ENCODE measurements at regions of chr10 and their contacts with region 1.

Region 1: DNA sequence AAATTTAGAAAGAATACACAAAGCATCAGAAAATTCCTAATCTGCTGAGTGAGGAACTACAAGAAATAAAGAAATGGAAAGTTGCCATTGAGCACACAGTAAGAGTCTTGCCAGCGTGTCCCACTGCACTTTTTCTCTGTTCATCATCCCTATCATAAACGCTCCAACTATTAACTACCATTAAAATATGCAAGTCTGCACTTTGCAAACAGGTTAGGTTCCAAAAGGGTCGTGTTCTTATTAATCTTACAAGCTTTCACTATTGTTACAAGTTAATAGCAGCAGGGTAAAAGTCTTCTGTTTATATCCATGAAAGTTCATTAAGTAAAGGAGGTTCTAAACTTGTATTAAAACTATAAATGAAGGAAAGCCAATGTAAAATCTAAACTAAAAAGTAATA is 5.2 kb upstream of the JMJD1C start:
- DNase-seq: no peak
- ATAC-seq: no peak
- H3K4me3 ChIP-seq: no peak overlapping the region
- H3K4me3 Mint-ChIP-seq: no peak overlapping the region
- H3K27ac ChIP-seq: no peak overlapping the region
- H3K27ac Mint-ChIP-seq: no peak overlapping the region
- H3K4me1 ChIP-seq: peaks cover 5% of the 10 kb centered on the region
- H3K4me1 Mint-ChIP-seq: peaks cover 8 to 10% of the 10 kb centered on the region in 2 donors
- H3K27me3 ChIP-seq: no peaks in the 10 kb centered on the region
- H3K27me3 Mint-ChIP-seq: peaks cover 0 to 7% of the 10 kb centered on the region in 2 donors
- CTCF ChIP-seq: no peak

Region 2: GRCh38 chr10:63506554-63506953 is 35.6 kb after region 1 on chr10:
- intact Hi-C with region 1: loop called (anchors 5 kb)
- DNase-seq: no peak
- ATAC-seq: no peak
- H3K4me3 ChIP-seq: no peak overlapping the region
- H3K4me3 Mint-ChIP-seq: no peak overlapping the region
- H3K27ac ChIP-seq: no peak overlapping the region
- H3K27ac Mint-ChIP-seq: no peak overlapping the region
- H3K4me1 ChIP-seq: no peaks in the 10 kb centered on the region
- H3K4me1 Mint-ChIP-seq: peaks cover 22 to 24% of the 10 kb centered on the region in 2 donors
- H3K27me3 ChIP-seq: no peaks in the 10 kb centered on the region
- H3K27me3 Mint-ChIP-seq: no peaks in the 10 kb centered on the region
- CTCF ChIP-seq: no peak

Measured in natural killer cell (primary cell).